GM12878 (cell line): ENCODE measurements at regions of chr17 and their contacts with region 1.

Region 1: DNA sequence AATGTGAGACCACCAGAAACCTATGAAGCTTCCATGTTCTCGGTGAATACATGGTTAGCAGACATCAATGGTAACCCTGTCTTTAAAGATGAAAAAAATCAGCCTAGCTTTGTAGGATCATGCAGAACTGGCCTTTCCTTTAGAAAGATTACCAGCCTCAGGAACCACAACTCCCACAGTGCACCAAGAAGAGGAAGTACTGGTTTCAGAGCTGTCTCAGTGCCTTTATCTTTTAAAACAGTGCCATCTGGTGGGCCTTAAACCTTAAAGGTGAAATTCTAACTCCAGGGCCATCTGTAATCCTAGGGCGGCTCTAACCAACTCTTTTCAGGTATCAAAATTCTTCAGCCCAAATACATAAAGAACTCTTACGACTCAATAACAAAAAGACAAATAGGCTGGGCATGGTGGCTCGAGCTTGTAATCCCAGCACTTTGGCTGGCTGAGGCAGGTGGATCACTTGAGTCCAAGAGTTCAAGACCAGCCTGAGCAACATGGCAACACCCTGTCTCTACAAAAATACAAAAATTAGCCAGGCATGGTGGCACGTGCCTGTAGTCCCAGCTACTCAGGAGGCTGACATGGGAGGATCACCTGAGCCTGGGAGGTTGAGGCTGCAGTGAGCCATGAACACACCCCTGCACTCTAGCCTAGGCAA is 5.4 kb downstream of the ATPAF2 start:
- DNase-seq: peak; percentile 67
- ATAC-seq: peak; percentile 89
- H3K4me3 ChIP-seq: no peak overlapping the region
- H3K27ac ChIP-seq: no peak overlapping the region
- H3K4me1 ChIP-seq: peaks cover 16% of the 10 kb centered on the region
- H3K27me3 ChIP-seq: no peaks in the 10 kb centered on the region
- CTCF ChIP-seq: peak; percentile 35 to 92 (median 62); a peak in 5 of 6 replicates
- EP300 ChIP-seq: peak in 1 of 2 experiments; percentile 17; a peak in 1 of 4 replicates
- POLR2A ChIP-seq: no peak
- RAD21 ChIP-seq: peak; percentile 94

Region 2: GRCh38 chr17:17675925-17676534 is 357.5 kb before region 1 on chr17:
- CTCF ChIA-PET with region 1: interaction called, 19 read pairs
- POLR2A ChIA-PET with region 1: no interaction called
- RAD21 ChIA-PET with region 1: interaction called, 3 read pairs
- SMC1A ChIA-PET with region 1: interaction called, 4 read pairs
- in situ Hi-C with region 1: loop called (anchors 5 kb)
- intact Hi-C with region 1: no loop called
- DNase-seq: no peak
- ATAC-seq: peak; percentile 64
- H3K4me3 ChIP-seq: no peak overlapping the region
- H3K27ac ChIP-seq: no peak overlapping the region
- H3K4me1 ChIP-seq: peaks cover 27% of the 10 kb centered on the region
- H3K27me3 ChIP-seq: no peaks in the 10 kb centered on the region; a peak in 1 of 4 replicates
- CTCF ChIP-seq: no peak
- EP300 ChIP-seq: no peak
- POLR2A ChIP-seq: no peak
- RAD21 ChIP-seq: no peak

Region 3: DNA sequence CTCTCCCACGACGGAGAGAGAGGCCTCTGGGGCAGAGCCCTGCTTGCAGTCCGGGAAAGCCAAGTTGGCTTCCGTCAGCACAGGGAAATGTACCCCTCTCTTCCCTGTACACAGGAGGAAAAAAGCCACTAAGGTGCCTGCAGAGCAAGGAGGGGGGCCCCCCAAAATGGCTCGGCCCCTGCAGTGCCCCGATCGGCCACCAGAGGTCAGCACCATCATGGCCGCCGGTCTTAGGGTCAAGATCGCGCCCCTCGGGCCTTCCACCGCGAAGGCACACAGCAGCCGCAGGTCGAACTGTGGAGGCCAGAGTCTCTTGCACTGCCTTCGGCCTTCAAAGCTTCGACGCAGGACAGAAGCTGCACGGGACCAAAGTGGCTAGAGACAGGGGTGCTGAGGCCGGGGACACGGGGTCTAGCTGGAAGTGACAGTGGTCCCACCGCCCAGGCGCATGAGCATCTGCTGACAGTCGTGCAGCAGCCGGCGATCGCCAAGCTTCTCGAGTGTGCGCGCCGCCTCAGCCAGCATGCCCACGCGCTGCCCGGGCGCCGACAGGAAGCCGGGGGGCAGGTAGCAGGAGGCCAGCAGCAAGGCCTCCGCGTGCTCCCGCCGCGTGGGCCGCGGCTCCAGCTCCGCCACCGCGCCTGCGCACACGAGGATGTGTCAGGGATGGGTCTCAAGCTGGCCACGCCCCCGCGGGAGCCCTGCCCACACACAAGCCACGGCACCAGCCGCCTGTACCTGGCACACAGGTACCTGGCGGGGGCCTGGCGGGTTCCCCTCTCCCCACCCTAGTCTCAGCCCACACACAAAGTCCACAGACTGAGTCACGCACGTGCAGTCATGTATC is 221.1 kb before region 1 on chr17:
- CTCF ChIA-PET with region 1: interaction called, 7 read pairs
- POLR2A ChIA-PET with region 1: no interaction called
- RAD21 ChIA-PET with region 1: interaction called, 3 read pairs
- SMC1A ChIA-PET with region 1: interaction called, 10 read pairs
- in situ Hi-C with region 1: loop called (anchors 5 kb)
- intact Hi-C with region 1: no loop called
- DNase-seq: no peak
- ATAC-seq: peak; percentile 77
- H3K4me3 ChIP-seq: no peak overlapping the region
- H3K27ac ChIP-seq: no peak overlapping the region
- H3K4me1 ChIP-seq: peaks cover 8% of the 10 kb centered on the region
- H3K27me3 ChIP-seq: no peaks in the 10 kb centered on the region
- CTCF ChIP-seq: peak; percentile 97 to 99 (median 98); a peak in 5 of 6 replicates
- EP300 ChIP-seq: no peak
- POLR2A ChIP-seq: no peak
- RAD21 ChIP-seq: peak; percentile 74

Region 4: GRCh38 chr17:17900615-17901520 is 132.7 kb before region 1 on chr17:
- CTCF ChIA-PET with region 1: interaction called, 73 read pairs
- POLR2A ChIA-PET with region 1: no interaction called
- RAD21 ChIA-PET with region 1: interaction called, 3 read pairs
- SMC1A ChIA-PET with region 1: interaction called, 8 read pairs
- in situ Hi-C with region 1: no loop called
- intact Hi-C with region 1: no loop called
- DNase-seq: no peak
- ATAC-seq: no peak
- H3K4me3 ChIP-seq: no peak overlapping the region
- H3K27ac ChIP-seq: no peak overlapping the region
- H3K4me1 ChIP-seq: peaks cover 25% of the 10 kb centered on the region
- H3K27me3 ChIP-seq: no peaks in the 10 kb centered on the region
- CTCF ChIP-seq: no peak
- EP300 ChIP-seq: no peak
- POLR2A ChIP-seq: no peak
- RAD21 ChIP-seq: no peak

Region 5: GRCh38 chr17:17972126-17972951 is 61.2 kb before region 1 on chr17 and contains the starts of genes DRC3 and TOM1L2:
- CTCF ChIA-PET with region 1: interaction called, 7 read pairs
- POLR2A ChIA-PET with region 1: interaction called, 6 read pairs
- RAD21 ChIA-PET with region 1: interaction called, 11 read pairs
- SMC1A ChIA-PET with region 1: interaction called, 9 read pairs
- in situ Hi-C with region 1: no loop called
- intact Hi-C with region 1: no loop called
- DNase-seq: peak; percentile 100
- ATAC-seq: peak; percentile 96
- H3K4me3 ChIP-seq: peak within 1 kb of the TSS; percentile 76
- H3K27ac ChIP-seq: peak within 1 kb of the TSS; percentile 18; the same call in 1 of the 2 replicates
- H3K4me1 ChIP-seq: peaks cover 10% of the 10 kb centered on the region
- H3K27me3 ChIP-seq: no peaks in the 10 kb centered on the region
- CTCF ChIP-seq: no peak
- EP300 ChIP-seq: peak; percentile 29 to 31; a peak in 2 of 4 replicates
- POLR2A ChIP-seq: peak; percentile 66
- RAD21 ChIP-seq: no peak
- polyA plus RNA-seq, gene DRC3: 0.60 to 0.71 TPM
- polyA plus RNA-seq, gene TOM1L2: 0.19 to 0.42 TPM